ENCODE measurements at regions of chr3 and their contacts with region 1.

Region 1: GRCh38 chr3:37453393-37454389 is 279.3 kb upstream of the LRRFIP2 start:
- DNase-seq: peak; percentile 79
- ATAC-seq: peak; percentile 72

Region 2: DNA sequence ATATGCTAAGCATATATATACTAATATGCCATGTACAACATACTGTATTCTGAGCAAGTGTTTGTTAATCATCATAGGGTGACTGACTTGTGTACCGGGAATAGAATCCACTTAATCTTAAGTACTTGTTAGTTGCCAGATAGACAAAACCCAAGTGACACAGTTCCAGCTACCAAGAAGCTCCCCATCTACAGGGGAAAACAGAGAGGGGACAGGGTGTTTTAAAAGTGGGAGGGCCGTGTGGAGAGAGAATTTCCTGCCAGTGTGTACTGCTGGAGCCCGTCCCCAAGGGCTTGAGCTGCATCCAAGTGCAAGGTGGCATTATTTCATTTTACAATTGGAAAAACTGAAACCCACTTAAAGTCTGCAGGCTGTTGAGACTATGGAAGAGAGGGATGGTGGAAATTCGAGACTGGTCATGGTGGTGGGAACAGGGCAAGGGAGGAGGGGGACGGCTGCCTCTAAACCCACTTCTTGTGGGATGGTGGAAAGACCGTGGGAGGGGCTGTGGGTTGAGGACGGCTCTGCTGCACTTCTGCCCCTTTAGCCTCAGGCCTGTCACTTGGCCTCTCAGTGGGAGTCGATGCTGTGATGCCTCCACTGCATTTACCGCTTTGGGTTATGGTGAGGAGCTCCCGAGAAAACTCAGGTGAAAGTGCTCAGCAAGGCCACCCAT is 31.3 kb after region 1 on chr3:
- intact Hi-C with region 1: loop called (anchors 2 kb)
- DNase-seq: no peak
- ATAC-seq: peak; percentile 48

Region 3: GRCh38 chr3:37492977-37493471 is 39.3 kb after region 1 on chr3:
- intact Hi-C with region 1: loop called (anchors 2 kb)
- DNase-seq: no peak
- ATAC-seq: peak; percentile 80

Region 4: GRCh38 chr3:37511463-37511920 is 57.8 kb after region 1 on chr3:
- intact Hi-C with region 1: no loop called
- DNase-seq: no peak
- ATAC-seq: peak; percentile 53

Region 5: GRCh38 chr3:37526511-37526910 is 72.8 kb after region 1 on chr3:
- intact Hi-C with region 1: loop called (anchors 5 kb)
- DNase-seq: peak; percentile 82
- ATAC-seq: peak; percentile 96

Region 6: DNA sequence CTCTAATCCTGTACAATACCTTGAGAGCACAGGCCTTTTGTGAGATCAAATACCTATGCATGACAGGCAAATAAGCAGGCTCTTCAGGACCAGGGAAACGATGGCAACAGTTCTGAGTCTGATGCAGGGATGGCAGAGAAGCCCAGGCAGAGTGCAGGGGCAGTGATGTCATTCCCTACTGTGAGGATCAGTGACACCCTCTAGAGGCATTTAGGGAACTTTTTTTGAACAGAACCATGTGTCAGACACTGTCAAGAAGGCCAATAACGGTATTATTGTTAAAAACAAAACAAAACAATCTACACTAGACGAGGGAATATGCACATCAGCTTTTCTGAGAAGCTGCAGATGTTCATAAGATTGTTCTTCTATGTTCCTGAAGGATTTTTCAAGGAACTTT is 93.2 kb after region 1 on chr3:
- intact Hi-C with region 1: loop called (anchors 2 kb)
- DNase-seq: no peak
- ATAC-seq: peak; percentile 78

Region 7: GRCh38 chr3:37736624-37737023 is 282.9 kb after region 1 on chr3:
- intact Hi-C with region 1: loop called (anchors 1 kb)
- DNase-seq: no peak
- ATAC-seq: no peak